ENCODE measurements at regions of chr16 and their contacts with region 1.

Region 1: GRCh38 chr16:27235055-27235937 is 32.0 kb downstream of the KDM8 start:
- DNase-seq: peak; percentile 83 to 93
- H3K4me3 ChIP-seq: no peak overlapping the region
- H3K27ac ChIP-seq: peak overlapping the region; percentile 81 to 86
- H3K4me1 ChIP-seq: no peaks in the 10 kb centered on the region
- H3K27me3 ChIP-seq: no peaks in the 10 kb centered on the region
- CTCF ChIP-seq: peak; percentile 64 to 88 (median 80)
- POLR2A ChIP-seq: peak in 1 of 2 donors; percentile 30

Region 2: GRCh38 chr16:27367461-27368357 is 132.4 kb after region 1 on chr16:
- intact Hi-C with region 1: loop called (anchors 10 kb)
- DNase-seq: peak; percentile 81 to 84
- H3K4me3 ChIP-seq: peak overlapping the region in 1 of 2 donors; percentile 15
- H3K27ac ChIP-seq: peak overlapping the region; percentile 56 to 75
- H3K4me1 ChIP-seq: no peaks in the 10 kb centered on the region
- H3K27me3 ChIP-seq: no peaks in the 10 kb centered on the region
- CTCF ChIP-seq: peak; percentile 82 to 92 (median 86)
- POLR2A ChIP-seq: no peak

Measured in uterus (tissue), 4 donors.